ENCODE measurements at regions of chr12 and their contacts with region 1.

Region 1: DNA sequence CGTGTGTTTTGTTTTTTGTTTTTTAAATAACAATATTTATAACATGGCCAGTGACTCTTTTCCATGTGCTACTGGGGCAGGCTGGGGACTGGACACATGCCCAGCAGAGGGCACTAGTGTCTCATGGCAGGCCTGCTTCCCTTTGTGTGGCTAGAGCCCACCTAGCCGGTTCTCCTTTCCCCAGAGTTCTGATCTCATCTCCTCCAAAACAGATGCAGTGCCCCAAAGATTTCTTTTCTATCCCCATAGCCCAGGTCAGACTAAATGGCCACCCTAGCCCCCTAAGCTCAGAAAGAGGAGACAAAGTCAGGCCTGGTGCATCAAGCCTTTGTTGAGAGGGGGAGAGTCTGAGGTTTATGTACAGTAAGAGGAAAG is 21.2 kb downstream of the PRPF40B start:
- DNase-seq: peak; percentile 68
- H3K4me3 Mint-ChIP-seq: no peak overlapping the region
- H3K27ac Mint-ChIP-seq: no peak overlapping the region
- H3K4me1 Mint-ChIP-seq: no peaks in the 10 kb centered on the region
- H3K27me3 Mint-ChIP-seq: no peaks in the 10 kb centered on the region
- CTCF ChIP-seq: peak; percentile 75

Region 2: GRCh38 chr12:49707128-49707811 is 62.7 kb after region 1 on chr12 and contains the start of gene FMNL3:
- CTCF ChIA-PET with region 1: no interaction called
- intact Hi-C with region 1: loop called (anchors 5 kb)
- DNase-seq: peak; percentile 95
- H3K4me3 Mint-ChIP-seq: peak within 1 kb of the TSS; percentile 38
- H3K27ac Mint-ChIP-seq: peak within 1 kb of the TSS; percentile 16
- H3K4me1 Mint-ChIP-seq: peaks cover 8% of the 10 kb centered on the region
- H3K27me3 Mint-ChIP-seq: peaks cover 53% of the 10 kb centered on the region
- CTCF ChIP-seq: peak; percentile 83
- total RNA-seq, gene FMNL3: 4.4 TPM in 2 replicates

Region 3: DNA sequence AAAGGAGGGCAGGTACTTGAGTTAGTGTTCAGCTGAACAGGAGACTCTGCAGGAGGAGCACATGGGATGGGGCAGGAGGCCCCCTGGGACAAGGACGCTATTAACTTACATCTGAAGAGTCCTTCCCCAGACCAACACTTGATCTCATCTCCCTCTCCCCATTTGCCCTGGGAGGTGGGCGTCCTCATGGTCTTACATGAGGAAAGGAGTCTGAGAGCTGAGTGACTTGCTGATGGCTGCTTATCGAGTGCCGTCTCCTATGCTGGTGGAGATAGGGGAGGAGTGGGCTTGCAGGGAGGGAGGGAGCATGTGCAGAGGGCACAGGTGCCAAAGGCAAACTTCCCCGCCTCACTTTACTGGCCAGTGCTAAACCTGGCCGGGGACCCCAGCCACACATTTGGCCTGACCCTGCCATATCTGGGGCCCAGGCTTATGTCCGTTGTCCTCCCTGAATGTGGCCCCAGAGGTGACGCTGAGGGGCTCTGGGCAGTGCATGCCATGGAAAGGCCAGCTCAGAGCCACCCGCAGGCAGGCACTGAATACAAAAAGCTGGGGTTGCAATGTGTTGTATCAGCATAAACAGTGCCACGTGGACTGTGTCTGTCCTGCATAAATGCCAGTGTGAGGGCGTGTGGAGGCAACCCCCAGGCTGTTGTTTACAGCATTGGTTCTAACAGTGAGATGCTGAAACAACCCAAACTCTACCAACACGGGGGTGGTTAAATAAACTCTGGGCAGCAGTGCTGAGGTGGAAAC is 229.7 kb after region 1 on chr12:
- CTCF ChIA-PET with region 1: no interaction called
- intact Hi-C with region 1: no loop called
- DNase-seq: no peak
- H3K4me3 Mint-ChIP-seq: no peak overlapping the region
- H3K27ac Mint-ChIP-seq: no peak overlapping the region
- H3K4me1 Mint-ChIP-seq: no peaks in the 10 kb centered on the region
- H3K27me3 Mint-ChIP-seq: no peaks in the 10 kb centered on the region
- CTCF ChIP-seq: no peak

Measured in Calu3 (cell line).